Ascending aorta (tissue), 2 donors: ENCODE measurements at regions of chr20 and their contacts with region 1.

Region 1: GRCh38 chr20:37327748-37328147 is 18.2 kb upstream of the SRC start:
- DNase-seq: peak; percentile 80 to 96
- H3K4me3 ChIP-seq: no peak overlapping the region
- H3K27ac ChIP-seq: peak overlapping the region; percentile 64 to 74
- H3K4me1 ChIP-seq: peaks cover 0 to 21% of the 10 kb centered on the region in 2 donors
- H3K27me3 ChIP-seq: no peaks in the 10 kb centered on the region
- CTCF ChIP-seq: no peak

Region 2: GRCh38 chr20:37345339-37346230 is 17.8 kb after region 1 on chr20 and contains the start of gene SRC:
- intact Hi-C with region 1: loop called (anchors 2 kb)
- DNase-seq: peak in 1 of 2 donors; percentile 90
- H3K4me3 ChIP-seq: peak within 1 kb of the TSS; percentile 83 to 94
- H3K27ac ChIP-seq: peak within 1 kb of the TSS; percentile 95 to 97
- H3K4me1 ChIP-seq: peaks cover 13 to 39% of the 10 kb centered on the region in 2 donors
- H3K27me3 ChIP-seq: no peaks in the 10 kb centered on the region
- CTCF ChIP-seq: no peak
- total RNA-seq, gene SRC: 67.4 TPM